ENCODE measurements at regions of chr7 and their contacts with region 1.

Region 1: DNA sequence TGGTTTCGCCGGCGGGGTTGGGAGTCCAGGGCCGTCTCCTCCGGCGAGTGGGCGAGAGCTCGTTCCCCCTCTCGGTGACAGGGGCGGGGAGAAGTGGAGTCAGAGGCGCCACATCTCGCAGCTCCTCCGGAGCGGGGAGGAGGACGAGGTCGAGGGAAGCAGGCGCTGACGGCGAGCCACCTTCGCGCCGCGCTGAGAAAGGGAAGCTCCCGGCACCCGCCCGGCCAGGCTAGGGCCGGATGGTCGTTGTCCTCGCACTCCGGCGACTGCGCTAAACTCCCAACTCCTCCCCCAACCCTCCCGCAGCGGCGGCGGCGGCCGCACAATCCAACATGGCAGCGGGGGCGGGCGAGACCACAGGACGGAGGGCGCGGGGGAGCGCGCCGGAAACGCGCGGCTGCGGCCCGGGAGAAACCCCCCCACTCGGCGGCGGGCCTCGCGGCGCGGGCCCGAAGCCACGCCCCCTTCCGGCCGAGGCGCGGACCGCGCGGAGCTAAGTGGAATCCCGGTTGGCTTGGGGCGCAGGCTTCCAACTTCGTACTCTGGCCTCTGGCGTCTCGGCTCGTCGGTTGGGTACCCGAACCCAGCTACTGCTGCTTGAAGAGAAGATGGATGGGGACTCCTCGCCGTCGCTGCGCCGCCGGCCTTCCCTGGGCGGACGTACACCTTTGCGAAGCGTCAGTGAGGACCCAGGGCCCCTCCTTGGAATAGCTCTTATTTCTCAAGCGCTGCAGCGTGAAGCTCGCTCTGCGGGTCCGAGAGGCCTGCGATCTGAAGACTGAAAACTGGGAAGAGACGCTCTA is at the start of gene WASL:
- DNase-seq: peak; percentile 41
- ATAC-seq: peak; percentile 79
- H3K4me3 ChIP-seq: peak within 1 kb of the TSS; percentile 95
- H3K27ac ChIP-seq: peak within 1 kb of the TSS; percentile 95
- H3K4me1 ChIP-seq: no peaks in the 10 kb centered on the region
- H3K27me3 ChIP-seq: no peaks in the 10 kb centered on the region
- CTCF ChIP-seq: no peak; a peak in 1 of 6 replicates
- EP300 ChIP-seq: peak; percentile 51; a peak in 2 of 4 replicates
- POLR2A ChIP-seq: peak; percentile 93
- RAD21 ChIP-seq: no peak
- polyA plus RNA-seq, gene WASL: 2.0 to 2.1 TPM

Region 2: DNA sequence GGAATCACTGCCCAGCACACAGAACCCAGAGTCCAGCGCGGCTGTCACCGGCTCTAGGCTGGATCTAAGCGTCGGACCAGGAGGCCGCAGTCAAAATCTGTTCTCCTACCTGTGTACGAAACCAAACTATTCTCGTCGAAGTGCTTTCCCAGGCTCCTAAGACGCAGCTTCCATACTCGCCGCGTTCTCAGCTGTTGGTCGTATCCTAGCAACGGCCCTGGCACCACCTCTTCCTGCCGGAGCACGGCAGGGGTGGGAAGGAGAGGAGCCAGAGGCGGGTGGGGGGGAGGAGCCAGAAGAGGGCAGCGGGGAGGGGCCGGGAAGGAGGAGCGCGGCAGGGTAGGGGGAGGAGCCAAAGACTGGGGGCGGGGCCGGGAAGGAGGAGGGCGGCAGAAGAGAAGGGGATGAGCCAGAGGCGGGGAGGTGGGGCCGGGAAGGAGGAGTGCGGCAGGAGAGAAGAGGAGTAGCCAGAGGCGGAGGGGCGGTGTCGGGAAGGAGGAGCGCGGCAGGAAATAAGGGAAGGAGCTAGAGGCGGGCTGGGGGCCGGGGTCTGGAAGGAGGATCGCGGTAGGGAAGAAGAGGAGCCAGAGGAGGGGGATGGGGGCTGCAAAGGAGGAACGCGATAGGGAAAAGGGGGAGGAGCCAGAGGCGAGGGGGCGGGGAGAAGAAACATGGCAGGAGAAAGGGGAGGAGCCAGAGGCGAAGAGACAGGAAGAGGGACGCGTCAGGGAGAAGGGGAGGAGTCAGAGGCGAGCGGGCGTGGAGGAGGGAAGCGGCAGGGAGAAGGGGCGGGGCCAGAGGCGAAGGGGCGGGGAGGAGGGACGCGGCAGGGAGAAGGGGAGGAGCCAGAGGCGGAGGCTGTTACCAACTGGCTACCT is 214.3 kb before region 1 on chr7 and contains the start of gene IQUB:
- CTCF ChIA-PET with region 1: no interaction called
- POLR2A ChIA-PET with region 1: interaction called, 3 read pairs
- RAD21 ChIA-PET with region 1: no interaction called
- SMC1A ChIA-PET with region 1: no interaction called
- in situ Hi-C with region 1: no loop called
- intact Hi-C with region 1: loop called (anchors 5 kb)
- DNase-seq: peak; percentile 82
- ATAC-seq: peak; percentile 90
- H3K4me3 ChIP-seq: peak within 1 kb of the TSS; percentile 69
- H3K27ac ChIP-seq: no peak within 1 kb of the TSS; the same call in 1 of the 2 replicates
- H3K4me1 ChIP-seq: no peaks in the 10 kb centered on the region
- H3K27me3 ChIP-seq: peaks cover 0 to 3% of the 10 kb centered on the region in 2 experiments; a peak in 1 of 4 replicates
- CTCF ChIP-seq: no peak
- EP300 ChIP-seq: no peak
- POLR2A ChIP-seq: peak; percentile 49
- RAD21 ChIP-seq: no peak
- polyA plus RNA-seq, gene IQUB: not detected

Region 3: GRCh38 chr7:123601530-123601929 is 147.4 kb before region 1 on chr7 and contains the start of gene ASB15:
- CTCF ChIA-PET with region 1: no interaction called
- POLR2A ChIA-PET with region 1: no interaction called
- RAD21 ChIA-PET with region 1: no interaction called
- SMC1A ChIA-PET with region 1: no interaction called
- in situ Hi-C with region 1: no loop called
- intact Hi-C with region 1: no loop called
- DNase-seq: no peak
- ATAC-seq: no peak
- H3K4me3 ChIP-seq: no peak within 1 kb of the TSS
- H3K27ac ChIP-seq: no peak within 1 kb of the TSS
- H3K4me1 ChIP-seq: no peaks in the 10 kb centered on the region
- H3K27me3 ChIP-seq: no peaks in the 10 kb centered on the region; a peak in 1 of 4 replicates
- CTCF ChIP-seq: no peak
- EP300 ChIP-seq: no peak
- POLR2A ChIP-seq: no peak
- RAD21 ChIP-seq: no peak
- polyA plus RNA-seq, gene ASB15: not detected

Region 4: DNA sequence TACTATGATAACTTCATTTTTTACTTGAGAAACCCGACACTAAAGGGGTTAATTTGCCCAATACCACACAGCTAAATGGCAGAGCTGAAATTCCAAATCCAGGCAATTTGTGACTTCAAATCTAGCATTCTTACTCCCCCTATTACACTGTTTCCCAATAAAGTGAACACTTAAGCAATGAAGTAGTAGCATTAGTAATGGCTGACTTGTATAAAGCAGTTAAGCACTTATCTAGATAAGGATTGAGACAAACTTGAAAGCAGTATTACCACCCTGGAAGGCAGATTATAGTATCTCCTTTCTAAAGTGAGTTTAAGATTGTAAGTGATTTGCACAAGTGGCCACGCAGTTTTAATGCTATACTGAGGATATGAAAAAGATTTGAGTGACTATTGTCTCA is 39.4 kb before region 1 on chr7:
- CTCF ChIA-PET with region 1: interaction called, 3 read pairs
- POLR2A ChIA-PET with region 1: interaction called, 4 read pairs
- RAD21 ChIA-PET with region 1: interaction called, 11 read pairs
- SMC1A ChIA-PET with region 1: interaction called, 4 read pairs
- in situ Hi-C with region 1: no loop called
- intact Hi-C with region 1: no loop called
- DNase-seq: no peak
- ATAC-seq: no peak
- H3K4me3 ChIP-seq: no peak overlapping the region
- H3K27ac ChIP-seq: peak overlapping the region; percentile 6; the same call in 1 of the 2 replicates
- H3K4me1 ChIP-seq: peaks cover 5% of the 10 kb centered on the region
- H3K27me3 ChIP-seq: no peaks in the 10 kb centered on the region
- CTCF ChIP-seq: no peak
- EP300 ChIP-seq: no peak
- POLR2A ChIP-seq: no peak
- RAD21 ChIP-seq: no peak

Region 5: DNA sequence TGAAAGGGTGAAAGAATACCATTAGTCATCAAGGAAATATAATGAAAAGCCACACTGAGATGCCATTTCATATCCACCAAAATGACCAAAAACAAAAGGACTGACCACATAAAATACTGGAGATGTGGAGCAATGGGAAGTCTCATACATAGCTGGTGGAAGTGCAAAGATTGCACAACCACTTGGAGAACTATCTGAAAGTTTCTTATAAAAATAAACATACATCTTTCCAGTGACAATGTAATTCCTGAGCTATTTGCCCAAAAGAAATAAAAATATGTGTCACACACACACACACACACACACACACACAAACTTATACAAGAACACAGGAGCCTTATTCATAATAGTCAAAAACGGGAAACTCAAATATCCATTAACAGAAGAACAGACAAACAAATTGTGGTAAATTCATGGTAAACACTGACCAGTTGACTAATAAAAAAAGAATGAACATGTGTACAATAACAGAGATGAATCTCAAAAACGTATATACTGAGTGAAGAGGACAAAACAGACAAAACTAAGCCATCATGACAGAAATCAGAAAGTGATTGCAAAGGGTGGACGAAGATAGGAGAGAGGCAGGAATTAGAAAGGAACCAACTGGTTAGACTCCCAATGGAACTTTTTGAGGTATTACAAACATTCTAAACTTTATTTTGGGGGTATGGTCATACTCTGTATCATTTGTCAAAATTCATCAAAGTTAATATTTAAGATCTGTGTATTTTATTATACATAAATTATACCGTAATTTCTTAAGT is 21.7 kb before region 1 on chr7:
- CTCF ChIA-PET with region 1: interaction called, 5 read pairs
- POLR2A ChIA-PET with region 1: interaction called, 7 read pairs
- RAD21 ChIA-PET with region 1: interaction called, 5 read pairs
- SMC1A ChIA-PET with region 1: interaction called, 12 read pairs
- in situ Hi-C with region 1: no loop called
- intact Hi-C with region 1: loop called (anchors 2 kb)
- DNase-seq: no peak
- ATAC-seq: peak; percentile 14; the same call in 2 of the 3 replicates
- H3K4me3 ChIP-seq: no peak overlapping the region
- H3K27ac ChIP-seq: no peak overlapping the region
- H3K4me1 ChIP-seq: peaks cover 12% of the 10 kb centered on the region; the same call in 1 of the 2 replicates
- H3K27me3 ChIP-seq: no peaks in the 10 kb centered on the region
- CTCF ChIP-seq: no peak
- EP300 ChIP-seq: no peak
- POLR2A ChIP-seq: no peak
- RAD21 ChIP-seq: no peak

Region 6: GRCh38 chr7:123738356-123738755 is 10.6 kb before region 1 on chr7:
- CTCF ChIA-PET with region 1: interaction called, 3 read pairs
- POLR2A ChIA-PET with region 1: interaction called, 5 read pairs
- RAD21 ChIA-PET with region 1: interaction called, 5 read pairs
- SMC1A ChIA-PET with region 1: interaction called, 11 read pairs
- in situ Hi-C with region 1: no loop called
- intact Hi-C with region 1: no loop called
- DNase-seq: no peak
- ATAC-seq: no peak
- H3K4me3 ChIP-seq: no peak overlapping the region
- H3K27ac ChIP-seq: no peak overlapping the region
- H3K4me1 ChIP-seq: no peaks in the 10 kb centered on the region
- H3K27me3 ChIP-seq: no peaks in the 10 kb centered on the region
- CTCF ChIP-seq: no peak
- EP300 ChIP-seq: no peak
- POLR2A ChIP-seq: no peak
- RAD21 ChIP-seq: no peak

Region 7: DNA sequence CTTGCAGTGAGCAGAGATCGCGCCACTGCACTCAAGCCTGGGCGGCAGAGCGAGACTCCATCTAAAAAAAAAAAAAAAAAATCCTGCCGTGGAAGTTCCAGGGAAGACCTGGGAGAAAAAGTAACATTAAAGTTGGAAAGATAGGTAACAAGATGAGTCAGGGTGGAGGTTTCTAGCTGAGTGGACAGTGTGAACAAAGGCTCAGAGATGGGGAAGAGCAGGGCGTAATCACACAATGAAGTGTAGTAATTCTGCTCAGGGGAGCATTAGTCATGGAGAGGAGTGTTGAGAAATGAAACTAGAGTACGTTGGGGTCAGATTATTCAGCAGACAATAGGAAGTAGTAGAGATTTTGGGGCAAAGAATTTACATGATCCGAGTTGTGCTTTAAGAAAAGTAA is 21.4 kb after region 1 on chr7:
- CTCF ChIA-PET with region 1: interaction called, 9 read pairs
- POLR2A ChIA-PET with region 1: interaction called, 13 read pairs
- RAD21 ChIA-PET with region 1: interaction called, 4 read pairs
- SMC1A ChIA-PET with region 1: interaction called, 29 read pairs
- in situ Hi-C with region 1: no loop called
- intact Hi-C with region 1: no loop called
- DNase-seq: no peak
- ATAC-seq: peak; percentile 99
- H3K4me3 ChIP-seq: no peak overlapping the region
- H3K27ac ChIP-seq: no peak overlapping the region; the same call in 1 of the 2 replicates
- H3K4me1 ChIP-seq: no peaks in the 10 kb centered on the region
- H3K27me3 ChIP-seq: no peaks in the 10 kb centered on the region
- CTCF ChIP-seq: no peak
- EP300 ChIP-seq: peak in 1 of 2 experiments; percentile 47; a peak in 1 of 4 replicates
- POLR2A ChIP-seq: no peak
- RAD21 ChIP-seq: no peak

Region 8: DNA sequence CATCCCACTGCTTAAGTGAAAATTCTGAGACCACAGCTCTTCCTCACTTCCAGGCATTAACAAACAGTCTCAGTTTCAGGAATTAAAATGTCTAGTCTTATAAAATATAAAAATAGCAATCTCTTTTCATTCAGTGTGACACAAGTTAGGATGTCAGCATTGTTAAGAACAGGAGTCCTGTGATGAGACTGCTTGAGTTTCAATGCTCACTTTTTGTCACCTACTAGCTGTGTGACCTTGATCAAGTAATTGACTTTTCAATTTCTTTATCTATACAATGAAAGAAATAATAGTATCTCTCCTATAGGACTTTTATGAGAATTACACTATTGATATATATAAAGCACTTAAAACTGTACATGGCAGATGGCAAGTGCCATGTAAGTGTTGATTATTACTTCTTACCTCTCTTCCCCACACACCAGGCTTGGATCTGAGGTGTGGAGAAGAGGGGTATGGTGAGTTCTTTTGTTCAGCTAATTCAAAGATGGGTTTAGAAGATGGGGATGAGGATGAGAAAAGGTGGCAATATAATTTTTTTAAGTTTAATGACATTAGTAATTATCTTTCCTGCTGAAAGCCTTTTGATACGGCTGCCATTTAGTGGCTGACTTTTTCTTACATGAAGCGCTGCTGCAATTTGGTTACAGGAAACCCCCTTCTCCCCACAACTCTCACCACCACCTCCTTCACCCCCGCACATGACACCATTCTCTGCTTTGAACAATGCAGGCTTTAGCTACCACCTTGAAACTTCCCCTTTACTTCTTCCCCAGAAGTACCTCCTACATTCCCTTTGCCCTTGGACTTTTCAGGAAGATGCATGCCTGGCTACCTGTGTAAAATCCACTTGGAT is 75.2 kb after region 1 on chr7:
- CTCF ChIA-PET with region 1: no interaction called
- POLR2A ChIA-PET with region 1: interaction called, 10 read pairs
- RAD21 ChIA-PET with region 1: interaction called, 8 read pairs
- SMC1A ChIA-PET with region 1: interaction called, 5 read pairs
- in situ Hi-C with region 1: no loop called
- intact Hi-C with region 1: no loop called
- DNase-seq: peak; percentile 42
- ATAC-seq: peak; percentile 97
- H3K4me3 ChIP-seq: no peak overlapping the region
- H3K27ac ChIP-seq: peak overlapping the region; percentile 71
- H3K4me1 ChIP-seq: peaks cover 11% of the 10 kb centered on the region
- H3K27me3 ChIP-seq: no peaks in the 10 kb centered on the region
- CTCF ChIP-seq: no peak
- EP300 ChIP-seq: peak in 1 of 2 experiments; percentile 56; a peak in 2 of 4 replicates
- POLR2A ChIP-seq: no peak
- RAD21 ChIP-seq: no peak